CD8-positive, alpha-beta T cell (primary cell): ENCODE measurements at regions of chr12 and their contacts with region 1.

Region 1: DNA sequence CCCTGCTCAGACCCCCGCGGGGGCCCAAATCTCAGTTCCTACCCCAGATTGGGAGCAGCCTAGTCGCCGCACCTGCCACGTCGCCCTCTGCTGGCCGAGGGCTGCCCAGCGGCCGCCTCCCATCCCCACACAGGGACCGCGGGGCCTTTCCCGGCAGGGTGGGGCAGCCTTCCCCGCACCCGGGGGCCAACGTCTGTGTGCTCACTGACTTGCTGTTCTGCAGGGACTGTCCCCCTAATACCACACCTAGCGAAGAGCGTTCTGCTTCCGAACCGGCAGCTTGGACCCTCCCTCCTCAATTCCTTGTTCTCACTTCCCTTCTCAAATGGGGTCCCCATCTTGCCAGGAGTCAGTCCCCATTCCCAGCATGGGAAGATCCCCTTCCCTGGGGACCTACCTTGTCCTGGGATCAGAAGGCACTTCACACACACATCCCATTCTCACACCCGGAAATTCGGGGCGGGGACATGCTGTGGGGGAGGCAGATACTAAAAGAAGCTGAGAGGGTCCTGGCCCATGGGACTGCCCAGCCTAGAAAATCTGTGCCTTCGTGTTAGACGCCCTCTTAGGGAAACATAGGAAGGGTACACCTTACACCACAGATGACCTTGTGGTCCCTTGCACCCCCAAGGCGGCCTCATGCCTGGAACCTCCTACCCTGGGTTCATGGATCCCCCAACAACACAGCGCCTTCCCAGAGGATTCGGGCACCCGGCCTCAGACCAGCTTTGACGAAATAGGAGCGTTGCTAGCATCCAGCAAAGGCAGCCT is 16.4 kb downstream of the ACVRL1 start:
- DNase-seq: peak; percentile 21 to 74 (median 55)
- ATAC-seq: peak; percentile 82
- H3K4me3 ChIP-seq: no peak overlapping the region
- H3K4me3 Mint-ChIP-seq: peak overlapping the region; percentile 43
- H3K27ac ChIP-seq: no peak overlapping the region
- H3K27ac Mint-ChIP-seq: no peak overlapping the region
- H3K4me1 ChIP-seq: peaks cover 4% of the 10 kb centered on the region
- H3K4me1 Mint-ChIP-seq: peaks cover 4% of the 10 kb centered on the region
- H3K27me3 ChIP-seq: peaks cover 0 to 7% of the 10 kb centered on the region in 2 experiments
- H3K27me3 Mint-ChIP-seq: peaks cover 3% of the 10 kb centered on the region
- CTCF ChIP-seq: peak; percentile 84

Region 2: GRCh38 chr12:51886021-51886322 is 37.7 kb before region 1 on chr12:
- CTCF ChIA-PET with region 1: interaction called, 11 read pairs
- POLR2A ChIA-PET with region 1: no interaction called
- intact Hi-C with region 1: loop called in 1 of 2 experiments (anchors 5 kb)
- DNase-seq: peak; percentile 8 to 77 (median 52)
- ATAC-seq: peak; percentile 97
- H3K4me3 ChIP-seq: no peak overlapping the region
- H3K4me3 Mint-ChIP-seq: peak overlapping the region; percentile 55
- H3K27ac ChIP-seq: peak overlapping the region in 1 of 2 experiments; percentile 62
- H3K27ac Mint-ChIP-seq: peak overlapping the region; percentile 91
- H3K4me1 ChIP-seq: peaks cover 8% of the 10 kb centered on the region
- H3K4me1 Mint-ChIP-seq: peaks cover 15% of the 10 kb centered on the region
- H3K27me3 ChIP-seq: no peaks in the 10 kb centered on the region
- H3K27me3 Mint-ChIP-seq: no peaks in the 10 kb centered on the region
- CTCF ChIP-seq: no peak

Region 3: GRCh38 chr12:51911788-51912711 is 11.6 kb before region 1 on chr12:
- CTCF ChIA-PET with region 1: interaction called, 17 read pairs
- POLR2A ChIA-PET with region 1: no interaction called
- intact Hi-C with region 1: no loop called
- DNase-seq: no peak
- ATAC-seq: no peak
- H3K4me3 ChIP-seq: no peak overlapping the region
- H3K4me3 Mint-ChIP-seq: no peak overlapping the region
- H3K27ac ChIP-seq: no peak overlapping the region
- H3K27ac Mint-ChIP-seq: no peak overlapping the region
- H3K4me1 ChIP-seq: no peaks in the 10 kb centered on the region
- H3K4me1 Mint-ChIP-seq: peaks cover 5% of the 10 kb centered on the region
- H3K27me3 ChIP-seq: peaks cover 2 to 10% of the 10 kb centered on the region in 2 experiments
- H3K27me3 Mint-ChIP-seq: peaks cover 22% of the 10 kb centered on the region
- CTCF ChIP-seq: no peak

Region 4: DNA sequence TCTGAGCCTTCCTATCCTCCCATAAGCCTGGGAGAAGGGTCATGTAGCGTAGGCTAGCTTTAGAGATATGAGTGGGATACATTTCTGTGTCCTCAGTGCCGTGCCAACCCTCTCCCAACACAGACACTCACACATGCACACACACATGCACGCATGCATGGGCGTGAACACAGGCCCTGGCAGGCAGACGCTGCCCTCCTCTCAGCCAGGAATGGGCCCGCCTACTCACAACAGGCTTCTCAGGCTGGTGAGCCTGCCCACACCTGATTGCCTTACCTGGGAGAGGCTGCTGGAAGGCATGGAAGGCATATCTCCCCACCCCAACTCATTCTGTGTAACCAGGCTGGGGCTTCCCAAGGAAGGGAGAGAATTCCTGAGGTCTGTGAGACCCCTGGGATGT is 15.0 kb after region 1 on chr12:
- CTCF ChIA-PET with region 1: interaction called, 32 read pairs
- POLR2A ChIA-PET with region 1: no interaction called
- intact Hi-C with region 1: no loop called
- DNase-seq: no peak
- ATAC-seq: no peak
- H3K4me3 ChIP-seq: no peak overlapping the region
- H3K4me3 Mint-ChIP-seq: no peak overlapping the region
- H3K27ac ChIP-seq: no peak overlapping the region
- H3K27ac Mint-ChIP-seq: no peak overlapping the region
- H3K4me1 ChIP-seq: no peaks in the 10 kb centered on the region
- H3K4me1 Mint-ChIP-seq: peaks cover 4% of the 10 kb centered on the region
- H3K27me3 ChIP-seq: no peaks in the 10 kb centered on the region
- H3K27me3 Mint-ChIP-seq: peaks cover 10% of the 10 kb centered on the region
- CTCF ChIP-seq: no peak

Region 5: GRCh38 chr12:51951199-51951842 is 27.6 kb after region 1 on chr12 and contains the start of gene ACVR1B:
- CTCF ChIA-PET with region 1: interaction called, 12 read pairs
- POLR2A ChIA-PET with region 1: no interaction called
- intact Hi-C with region 1: no loop called
- DNase-seq: peak; percentile 84 to 95 (median 91)
- ATAC-seq: peak; percentile 95
- H3K4me3 ChIP-seq: peak within 1 kb of the TSS; percentile 76 to 93
- H3K4me3 Mint-ChIP-seq: peak within 1 kb of the TSS; percentile 98
- H3K27ac ChIP-seq: peak within 1 kb of the TSS; percentile 44 to 69
- H3K27ac Mint-ChIP-seq: peak within 1 kb of the TSS; percentile 91
- H3K4me1 ChIP-seq: peaks cover 38% of the 10 kb centered on the region
- H3K4me1 Mint-ChIP-seq: peaks cover 42% of the 10 kb centered on the region
- H3K27me3 ChIP-seq: no peaks in the 10 kb centered on the region
- H3K27me3 Mint-ChIP-seq: no peaks in the 10 kb centered on the region
- CTCF ChIP-seq: no peak
- total RNA-seq, gene ACVR1B: 12.0 to 13.7 TPM

Region 6: GRCh38 chr12:51980051-51980808 is 56.5 kb after region 1 on chr12:
- CTCF ChIA-PET with region 1: interaction called, 19 read pairs
- POLR2A ChIA-PET with region 1: no interaction called
- intact Hi-C with region 1: loop called (anchors 1 kb)
- DNase-seq: peak; percentile 43 to 83 (median 68)
- ATAC-seq: peak; percentile 100
- H3K4me3 ChIP-seq: no peak overlapping the region
- H3K4me3 Mint-ChIP-seq: no peak overlapping the region
- H3K27ac ChIP-seq: no peak overlapping the region
- H3K27ac Mint-ChIP-seq: no peak overlapping the region
- H3K4me1 ChIP-seq: peaks cover 7% of the 10 kb centered on the region
- H3K4me1 Mint-ChIP-seq: peaks cover 26% of the 10 kb centered on the region
- H3K27me3 ChIP-seq: no peaks in the 10 kb centered on the region
- H3K27me3 Mint-ChIP-seq: no peaks in the 10 kb centered on the region
- CTCF ChIP-seq: peak; percentile 95

Region 7: GRCh38 chr12:52050116-52050760 is 126.6 kb after region 1 on chr12:
- CTCF ChIA-PET with region 1: no interaction called
- POLR2A ChIA-PET with region 1: no interaction called
- intact Hi-C with region 1: no loop called
- DNase-seq: peak in 2 of 9 experiments; percentile 54 to 70
- ATAC-seq: no peak
- H3K4me3 ChIP-seq: peak overlapping the region; percentile 80 to 87
- H3K4me3 Mint-ChIP-seq: peak overlapping the region; percentile 97
- H3K27ac ChIP-seq: peak overlapping the region; percentile 81 to 99
- H3K27ac Mint-ChIP-seq: peak overlapping the region; percentile 99
- H3K4me1 ChIP-seq: peaks cover 36% of the 10 kb centered on the region
- H3K4me1 Mint-ChIP-seq: peaks cover 35% of the 10 kb centered on the region
- H3K27me3 ChIP-seq: no peaks in the 10 kb centered on the region
- H3K27me3 Mint-ChIP-seq: peaks cover 3% of the 10 kb centered on the region
- CTCF ChIP-seq: no peak